ENCODE measurements at regions of chr11 and their contacts with region 1.

Region 1: DNA sequence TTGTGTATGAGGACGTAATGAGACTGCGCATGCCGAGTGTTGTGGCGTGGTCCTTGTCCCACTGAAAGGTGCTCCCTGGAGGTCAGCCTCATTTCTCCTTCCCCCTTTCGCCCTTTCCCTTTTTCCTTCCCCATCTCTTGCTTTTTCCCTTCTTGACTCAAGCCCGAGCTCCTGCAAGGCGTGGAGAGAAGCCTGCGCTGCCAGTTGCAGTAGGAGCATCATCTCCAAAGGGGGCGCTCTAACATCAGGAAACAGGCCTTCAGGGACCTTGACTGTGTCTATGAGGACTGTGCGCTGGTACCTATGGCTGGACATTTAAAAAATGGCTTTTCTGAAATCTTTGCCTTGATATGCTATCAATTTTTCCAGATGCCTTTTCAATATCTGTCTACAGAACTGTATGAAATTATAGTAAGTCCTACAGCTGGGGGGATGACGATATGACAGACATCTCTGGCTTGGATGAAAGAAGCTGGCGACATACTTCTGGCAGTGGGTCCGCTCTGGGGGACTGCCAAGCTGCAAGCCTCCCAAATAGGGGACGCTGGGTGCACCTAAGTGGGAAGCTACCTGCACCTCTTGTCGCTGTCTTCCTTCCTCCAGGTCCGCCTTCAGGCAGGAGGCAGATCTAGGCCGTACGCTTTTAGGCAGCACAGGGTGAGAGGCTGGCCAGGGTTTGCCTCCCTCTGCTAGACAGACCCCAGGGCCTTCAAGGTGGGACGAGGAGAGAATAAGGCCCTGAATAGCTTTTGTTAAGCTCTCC is 96.5 kb downstream of the NXPE2 start:
- DNase-seq: peak; percentile 51
- ATAC-seq: peak; percentile 96
- H3K4me3 ChIP-seq: no peak overlapping the region
- H3K27ac ChIP-seq: no peak overlapping the region
- H3K4me1 ChIP-seq: no peaks in the 10 kb centered on the region
- H3K27me3 ChIP-seq: peaks cover 2 to 12% of the 10 kb centered on the region in 2 experiments; a peak in 4 of 5 replicates
- CTCF ChIP-seq: peak; percentile 87
- EP300 ChIP-seq: no peak
- POLR2A ChIP-seq: no peak
- RAD21 ChIP-seq: peak; percentile 80

Region 2: DNA sequence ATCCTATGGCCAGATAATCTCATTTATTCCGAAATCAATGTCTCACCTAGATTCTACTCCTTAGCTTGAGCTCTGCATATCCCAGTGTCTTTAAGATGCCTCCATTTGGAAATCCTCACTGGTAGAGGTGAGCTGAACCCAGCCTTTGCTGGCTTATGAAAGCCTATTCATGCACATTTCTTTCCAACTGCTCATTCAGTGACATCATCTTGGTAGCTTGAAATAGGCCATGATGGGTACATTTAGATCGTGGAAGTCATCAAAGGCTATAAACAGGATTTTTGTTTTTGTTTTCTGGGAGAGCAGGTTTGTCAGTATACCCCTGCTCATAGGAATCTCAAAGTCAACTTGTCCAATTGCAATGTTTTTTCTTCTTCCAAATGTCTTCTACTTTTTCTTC is 221.1 kb before region 1 on chr11:
- CTCF ChIA-PET with region 1: no interaction called
- POLR2A ChIA-PET with region 1: no interaction called
- in situ Hi-C with region 1: no loop called
- intact Hi-C with region 1: no loop called
- DNase-seq: no peak
- ATAC-seq: no peak
- H3K4me3 ChIP-seq: no peak overlapping the region
- H3K27ac ChIP-seq: no peak overlapping the region
- H3K4me1 ChIP-seq: no peaks in the 10 kb centered on the region
- H3K27me3 ChIP-seq: no peaks in the 10 kb centered on the region; a peak in 1 of 5 replicates
- CTCF ChIP-seq: no peak
- EP300 ChIP-seq: no peak
- POLR2A ChIP-seq: no peak
- RAD21 ChIP-seq: no peak

Region 3: DNA sequence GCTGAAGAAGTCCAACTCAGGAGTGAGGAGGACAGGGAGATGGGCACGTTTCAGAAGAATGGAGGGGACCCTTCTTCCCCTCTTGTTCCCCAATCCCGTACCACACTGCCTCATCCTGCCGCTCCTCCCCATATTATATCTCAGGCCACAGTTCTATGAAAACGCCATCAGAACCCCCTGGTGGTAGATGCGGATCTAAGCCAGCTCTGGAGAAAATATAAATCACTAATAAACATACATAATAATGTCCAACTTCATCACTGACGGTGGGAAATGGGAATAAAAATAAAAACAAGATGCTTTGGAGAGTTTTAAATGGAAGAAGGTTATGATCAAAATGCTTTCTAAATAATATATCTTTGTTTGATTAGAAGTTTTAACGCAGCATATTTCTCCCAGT is 329.1 kb after region 1 on chr11:
- CTCF ChIA-PET with region 1: no interaction called
- POLR2A ChIA-PET with region 1: no interaction called
- in situ Hi-C with region 1: loop called (anchors 25 kb)
- intact Hi-C with region 1: loop called (anchors 10 kb)
- DNase-seq: no peak
- ATAC-seq: peak; percentile 35; the same call in 1 of the 3 replicates
- H3K4me3 ChIP-seq: no peak overlapping the region
- H3K27ac ChIP-seq: no peak overlapping the region
- H3K4me1 ChIP-seq: no peaks in the 10 kb centered on the region
- H3K27me3 ChIP-seq: peaks cover 0 to 10% of the 10 kb centered on the region in 2 experiments; a peak in 2 of 5 replicates
- CTCF ChIP-seq: no peak
- EP300 ChIP-seq: no peak
- POLR2A ChIP-seq: no peak
- RAD21 ChIP-seq: no peak

Region 4: GRCh38 chr11:115334932-115335788 is 560.4 kb after region 1 on chr11:
- CTCF ChIA-PET with region 1: no interaction called
- POLR2A ChIA-PET with region 1: no interaction called
- in situ Hi-C with region 1: loop called (anchors 10 kb)
- intact Hi-C with region 1: no loop called
- DNase-seq: peak; percentile 19
- ATAC-seq: no peak
- H3K4me3 ChIP-seq: no peak overlapping the region
- H3K27ac ChIP-seq: no peak overlapping the region
- H3K4me1 ChIP-seq: peaks cover 9% of the 10 kb centered on the region; the same call in 1 of the 2 replicates
- H3K27me3 ChIP-seq: peaks cover 0 to 1% of the 10 kb centered on the region in 2 experiments; a peak in 1 of 5 replicates
- CTCF ChIP-seq: peak; percentile 58
- EP300 ChIP-seq: no peak
- POLR2A ChIP-seq: no peak
- RAD21 ChIP-seq: 0 out of 2 replicates have a peak, but pooled peaks have one; percentile 56

Region 5: GRCh38 chr11:115672999-115673411 is 898.2 kb after region 1 on chr11:
- CTCF ChIA-PET with region 1: no interaction called
- POLR2A ChIA-PET with region 1: no interaction called
- in situ Hi-C with region 1: loop called (anchors 10 kb)
- intact Hi-C with region 1: no loop called
- DNase-seq: no peak
- ATAC-seq: no peak
- H3K4me3 ChIP-seq: no peak overlapping the region
- H3K27ac ChIP-seq: no peak overlapping the region
- H3K4me1 ChIP-seq: no peaks in the 10 kb centered on the region
- H3K27me3 ChIP-seq: peaks cover 1 to 12% of the 10 kb centered on the region in 2 experiments; a peak in 2 of 5 replicates
- CTCF ChIP-seq: no peak
- EP300 ChIP-seq: no peak
- POLR2A ChIP-seq: no peak
- RAD21 ChIP-seq: no peak

Region 6: GRCh38 chr11:116276051-116277044 is 1501.6 kb after region 1 on chr11:
- CTCF ChIA-PET with region 1: interaction called, 4 read pairs
- POLR2A ChIA-PET with region 1: no interaction called
- in situ Hi-C with region 1: no loop called
- intact Hi-C with region 1: loop called (anchors 2 kb)
- DNase-seq: peak; percentile 67
- ATAC-seq: peak; percentile 97
- H3K4me3 ChIP-seq: peak overlapping the region; percentile 39 to 71 (median 43); a peak in 4 of 6 replicates
- H3K27ac ChIP-seq: no peak overlapping the region
- H3K4me1 ChIP-seq: peaks cover 6% of the 10 kb centered on the region; the same call in 1 of the 2 replicates
- H3K27me3 ChIP-seq: no peaks in the 10 kb centered on the region; a peak in 1 of 5 replicates
- CTCF ChIP-seq: peak; percentile 92
- EP300 ChIP-seq: no peak
- POLR2A ChIP-seq: no peak
- RAD21 ChIP-seq: peak; percentile 93

Measured in HepG2 (cell line).